ENCODE measurements at regions of chr1 and their contacts with region 1.

Region 1: GRCh38 chr1:23496490-23497181 is 12.7 kb upstream of the ASAP3 start:
- DNase-seq: no peak
- ATAC-seq: no peak

Region 2: DNA sequence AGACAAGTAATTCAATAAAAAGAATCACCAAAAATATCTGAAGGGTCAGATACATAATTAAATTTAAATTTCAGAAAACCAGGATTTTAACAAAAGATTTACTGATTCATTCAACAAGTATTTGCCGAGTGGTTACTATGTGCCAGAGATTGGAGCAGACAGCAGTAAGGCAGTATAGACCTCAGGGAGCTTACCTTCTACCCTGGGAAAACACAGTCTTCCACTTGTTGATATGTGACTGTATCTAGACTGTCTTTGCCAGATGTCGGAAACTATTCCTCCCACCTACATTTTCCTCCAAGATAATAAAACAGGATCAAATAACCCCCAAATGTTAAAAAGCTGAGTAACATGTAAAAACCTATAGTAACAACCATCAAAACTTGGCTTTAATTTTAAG is 158.8 kb before region 1 on chr1:
- intact Hi-C with region 1: no loop called
- DNase-seq: no peak
- ATAC-seq: peak in 1 of 2 donors; percentile 26

Region 3: DNA sequence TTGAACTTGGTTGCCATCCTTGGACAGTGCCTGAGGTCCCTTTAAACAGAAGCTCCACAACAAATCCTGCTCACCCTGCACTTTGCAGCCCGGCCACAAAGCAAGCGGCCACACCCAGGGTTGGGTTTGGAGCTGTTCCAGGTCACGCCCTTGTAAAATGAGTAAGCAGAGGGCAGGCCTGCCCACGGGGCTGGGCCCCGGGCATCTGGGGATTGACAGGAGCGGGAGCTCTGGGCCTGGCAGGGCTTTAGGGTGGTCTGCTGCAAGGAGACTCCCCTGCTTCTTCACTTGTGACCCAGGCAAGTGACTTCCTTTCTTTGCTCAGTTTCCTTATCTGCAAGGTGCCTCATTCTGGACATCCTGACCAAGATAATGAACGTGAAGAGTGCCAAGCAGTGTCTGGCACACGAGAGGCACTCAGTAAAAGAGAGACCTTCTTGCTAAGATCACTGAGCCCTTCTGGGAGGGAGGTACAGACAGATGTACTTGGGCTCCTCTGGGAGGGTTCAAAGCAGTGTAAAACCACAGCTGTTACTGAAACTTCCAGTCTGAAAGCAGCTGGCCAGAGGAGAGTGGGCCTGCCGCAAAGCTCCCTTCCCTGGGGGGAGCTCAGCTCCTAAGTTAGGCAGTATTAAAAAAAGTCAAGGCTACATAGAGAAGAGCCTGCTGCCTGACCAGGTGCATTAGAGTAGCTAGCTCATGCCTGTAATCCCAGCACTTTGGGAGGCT is 31.8 kb after region 1 on chr1:
- intact Hi-C with region 1: no loop called
- DNase-seq: peak; percentile 86
- ATAC-seq: peak; percentile 67 to 87

Region 4: DNA sequence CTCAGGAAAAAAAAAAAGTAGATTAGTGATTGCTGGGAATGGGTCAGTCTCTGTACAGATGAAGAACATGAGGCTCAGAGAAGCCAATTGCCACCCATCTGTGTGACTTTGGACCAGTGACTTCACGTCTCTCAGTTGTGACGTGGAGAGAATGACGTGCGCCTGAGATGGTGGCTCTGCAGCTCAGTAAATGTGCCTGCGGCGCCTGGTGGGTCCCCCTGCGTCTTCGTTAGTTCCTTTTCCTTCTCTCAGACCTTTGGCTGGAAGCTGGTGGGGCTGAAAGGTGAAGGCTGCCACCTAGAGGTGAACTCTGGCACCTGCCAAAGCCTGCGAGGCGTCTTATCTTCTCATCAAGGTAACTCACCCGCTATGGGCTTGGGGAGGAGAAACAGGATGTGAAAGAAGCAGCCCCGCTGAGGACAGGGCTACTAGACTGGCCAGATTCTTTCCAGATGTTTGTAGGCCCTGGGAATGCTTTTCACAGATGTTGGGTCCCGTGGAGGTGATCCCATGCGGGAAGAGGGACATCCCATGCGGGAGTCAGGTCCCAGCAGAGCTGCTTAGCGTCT is 43.1 kb after region 1 on chr1:
- intact Hi-C with region 1: loop called (anchors 2 kb)
- DNase-seq: peak; percentile 84
- ATAC-seq: peak; percentile 87 to 93